ENCODE measurements at regions of chr1 and their contacts with region 1.

Region 1: GRCh38 chr1:157819896-157820295 is at the start of gene FCRL1:
- DNase-seq: no peak
- ATAC-seq: no peak
- H3K4me3 ChIP-seq: no peak within 1 kb of the TSS
- H3K27ac ChIP-seq: no peak within 1 kb of the TSS
- H3K4me1 ChIP-seq: no peaks in the 10 kb centered on the region
- H3K27me3 ChIP-seq: peaks cover 0 to 3% (median 0%) of the 10 kb centered on the region in 3 donors
- CTCF ChIP-seq: no peak
- total RNA-seq, gene FCRL1: 0.40 TPM in 1 of 4 donors, not detected in the others

Region 2: GRCh38 chr1:157678721-157679120 is 141.2 kb before region 1 on chr1:
- intact Hi-C with region 1: loop called in 1 of 2 experiments (anchors 5 kb)
- DNase-seq: no peak
- ATAC-seq: no peak
- H3K4me3 ChIP-seq: no peak overlapping the region
- H3K27ac ChIP-seq: no peak overlapping the region
- H3K4me1 ChIP-seq: no peaks in the 10 kb centered on the region
- H3K27me3 ChIP-seq: peaks cover 0 to 4% (median 0%) of the 10 kb centered on the region in 3 donors
- CTCF ChIP-seq: no peak